Caki2 (cell line): ENCODE measurements at regions of chr14 and their contacts with region 1.

Region 1: DNA sequence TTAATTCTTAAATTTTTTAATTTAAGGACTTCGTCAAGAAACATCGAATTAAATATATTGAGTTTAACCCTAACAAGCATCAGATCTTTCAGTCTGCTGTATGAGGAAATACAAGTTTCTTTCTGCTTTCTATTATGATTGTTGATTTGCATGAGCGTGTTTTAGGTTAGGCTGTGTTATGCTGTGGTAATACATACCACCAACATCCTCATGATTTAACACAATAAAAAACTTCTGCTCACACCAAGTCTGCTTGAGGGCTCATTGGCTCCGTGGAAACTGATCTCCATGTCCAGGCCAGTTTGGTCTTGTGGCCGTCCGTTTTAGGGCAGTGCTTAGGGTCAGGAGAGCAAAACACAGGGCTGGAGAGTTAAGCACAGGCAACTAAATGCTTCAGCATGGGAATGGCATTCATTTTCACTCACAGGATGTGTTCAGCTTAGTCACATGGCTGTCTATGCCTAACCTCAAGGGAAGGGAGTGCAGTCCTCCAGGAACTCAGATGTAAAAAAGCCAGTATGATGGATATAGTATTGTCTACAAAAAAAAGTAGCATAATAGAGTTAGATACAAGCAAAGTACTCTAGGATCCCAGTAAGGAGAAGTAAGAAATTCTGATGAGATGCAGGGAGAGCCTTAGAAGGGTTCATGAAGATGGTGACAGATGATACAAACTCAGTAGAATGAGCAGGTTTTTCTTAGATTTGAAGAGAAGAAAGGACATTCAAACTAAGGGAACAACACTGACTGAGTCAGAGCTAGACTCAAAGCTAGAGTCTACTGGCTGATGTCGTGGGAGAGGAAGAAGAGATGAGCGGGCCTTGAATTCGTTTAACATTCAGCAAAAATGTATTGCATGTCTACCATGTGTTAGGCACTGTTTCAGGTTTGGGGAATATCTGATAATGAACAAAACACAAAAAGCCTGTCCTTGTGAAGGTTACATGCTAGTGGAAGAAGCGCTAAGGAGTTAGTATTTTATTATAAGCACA is 16.3 kb downstream of the MARK3 start:
- DNase-seq: no peak

Region 2: GRCh38 chr14:103463149-103463548 is 61.6 kb after region 1 on chr14:
- in situ Hi-C with region 1: loop called (anchors 10 kb)
- DNase-seq: no peak